ENCODE measurements at regions of chr12 and their contacts with region 1.

Region 1: DNA sequence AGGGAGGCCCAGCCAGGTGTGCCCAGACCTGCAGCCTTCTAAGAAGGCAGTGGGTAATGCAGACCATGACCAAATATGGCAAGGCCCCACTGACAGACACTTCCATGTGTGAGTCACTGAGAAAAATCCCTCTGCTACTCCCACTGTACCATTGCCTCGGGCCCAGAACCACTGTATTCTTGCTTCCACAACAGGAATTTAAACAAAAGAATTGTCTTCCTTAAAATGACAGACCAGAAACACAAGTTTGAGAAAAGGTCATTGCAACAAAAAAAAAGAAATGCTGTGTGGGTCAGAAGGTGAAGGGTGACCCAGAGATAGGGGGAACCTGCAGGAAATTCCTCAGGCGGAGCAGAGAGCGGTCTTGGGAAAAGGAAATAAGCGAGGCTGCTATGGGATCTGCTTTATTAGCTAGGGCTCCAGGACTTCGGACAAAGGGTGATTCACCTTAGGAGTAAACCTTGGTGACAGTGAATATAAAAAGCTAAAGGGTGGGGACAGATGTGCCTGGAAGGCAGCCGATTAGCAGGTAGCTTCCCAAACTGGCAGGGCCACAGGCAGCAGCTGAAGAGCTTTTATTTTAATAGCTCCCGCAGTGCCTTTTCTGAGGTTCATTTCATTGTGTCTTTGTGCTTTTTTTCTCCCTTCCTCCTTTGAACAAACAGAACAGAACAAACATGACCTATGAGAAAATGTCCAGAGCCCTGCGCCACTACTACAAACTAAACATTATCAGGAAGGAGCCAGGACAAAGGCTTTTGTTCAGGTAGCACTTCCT is 185.3 kb upstream of the BCL2L14 start:
- DNase-seq: peak; percentile 66 to 82
- H3K4me3 ChIP-seq: no peak overlapping the region
- H3K4me3 Mint-ChIP-seq: peak overlapping the region; percentile 57
- H3K27ac Mint-ChIP-seq: peak overlapping the region; percentile 67
- H3K4me1 ChIP-seq: peaks cover 49% of the 10 kb centered on the region
- H3K4me1 Mint-ChIP-seq: peaks cover 42% of the 10 kb centered on the region
- H3K27me3 ChIP-seq: no peaks in the 10 kb centered on the region
- H3K27me3 Mint-ChIP-seq: no peaks in the 10 kb centered on the region
- CTCF ChIP-seq: no peak

Region 2: DNA sequence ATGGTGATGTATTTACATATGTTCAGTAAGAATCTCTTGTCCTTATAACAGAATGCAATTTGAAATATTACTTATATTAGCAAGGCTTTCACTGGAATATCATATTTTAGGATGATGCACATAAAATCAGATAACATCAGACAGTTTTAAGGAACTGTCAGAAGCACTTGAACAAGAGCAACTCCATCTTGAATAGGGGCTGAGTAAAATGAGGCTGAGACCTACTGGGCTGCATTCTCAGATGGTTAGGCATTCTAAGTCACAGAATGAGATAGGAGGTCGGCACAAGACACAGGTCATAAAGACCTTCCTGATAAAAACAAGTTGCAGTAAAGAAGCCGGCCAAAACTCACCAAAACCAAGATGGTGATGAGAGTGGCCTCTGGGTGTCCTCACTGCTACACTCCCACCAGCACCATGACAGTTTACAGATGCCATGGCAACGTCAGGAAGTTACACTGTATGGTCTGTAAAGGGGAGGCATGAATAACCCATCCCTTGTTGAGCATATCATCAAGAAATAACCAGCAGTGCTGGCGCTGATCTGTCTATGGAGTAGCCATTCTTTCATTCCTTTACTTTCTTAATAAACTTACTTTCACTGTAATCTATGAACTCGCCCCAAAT is 263.5 kb before region 1 on chr12:
- CTCF ChIA-PET with region 1: interaction called, 3 read pairs
- POLR2A ChIA-PET with region 1: no interaction called
- intact Hi-C with region 1: loop called (anchors 10 kb)
- DNase-seq: peak; percentile 29 to 45
- H3K4me3 ChIP-seq: no peak overlapping the region
- H3K4me3 Mint-ChIP-seq: no peak overlapping the region
- H3K27ac Mint-ChIP-seq: peak overlapping the region; percentile 80
- H3K4me1 ChIP-seq: peaks cover 19% of the 10 kb centered on the region
- H3K4me1 Mint-ChIP-seq: peaks cover 26% of the 10 kb centered on the region
- H3K27me3 ChIP-seq: no peaks in the 10 kb centered on the region
- H3K27me3 Mint-ChIP-seq: no peaks in the 10 kb centered on the region
- CTCF ChIP-seq: peak in 1 of 2 experiments; percentile 35

Region 3: GRCh38 chr12:11730299-11731041 is 155.0 kb before region 1 on chr12:
- CTCF ChIA-PET with region 1: interaction called, 3 read pairs
- POLR2A ChIA-PET with region 1: no interaction called
- intact Hi-C with region 1: loop called (anchors 10 kb)
- DNase-seq: peak; percentile 75 to 79
- H3K4me3 ChIP-seq: no peak overlapping the region
- H3K4me3 Mint-ChIP-seq: no peak overlapping the region
- H3K27ac Mint-ChIP-seq: peak overlapping the region; percentile 46
- H3K4me1 ChIP-seq: peaks cover 18% of the 10 kb centered on the region
- H3K4me1 Mint-ChIP-seq: peaks cover 14% of the 10 kb centered on the region
- H3K27me3 ChIP-seq: no peaks in the 10 kb centered on the region
- H3K27me3 Mint-ChIP-seq: no peaks in the 10 kb centered on the region
- CTCF ChIP-seq: no peak

Region 4: DNA sequence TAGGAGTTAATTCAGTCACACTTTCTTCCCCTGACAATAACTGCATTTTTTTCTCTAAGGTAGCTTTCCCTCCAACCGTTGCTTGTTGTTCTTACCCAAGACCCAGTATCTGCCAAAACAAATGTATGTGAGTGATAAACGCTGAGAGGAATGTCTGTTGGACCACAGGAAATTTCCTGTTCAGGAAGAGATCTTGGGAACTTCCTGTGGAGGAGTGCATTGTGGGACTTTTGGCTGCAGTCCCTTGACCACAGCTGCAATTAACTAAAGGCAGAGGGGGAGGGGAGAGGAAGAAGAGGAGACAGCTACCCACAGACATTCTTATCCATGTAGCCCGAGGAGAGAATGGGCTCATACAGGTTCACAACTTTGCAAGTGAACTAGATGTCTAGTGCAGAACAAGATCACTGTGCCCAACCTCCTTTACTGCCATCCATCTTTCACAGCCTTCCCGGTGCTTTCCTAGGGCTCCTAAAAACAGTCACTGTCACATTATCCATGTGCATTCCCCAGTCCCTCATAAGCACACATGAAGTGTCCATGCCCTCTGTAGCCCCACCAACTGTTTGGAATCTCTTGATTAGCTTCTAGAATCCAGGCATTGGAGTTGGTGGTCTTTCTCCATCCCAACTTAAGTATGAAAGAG is 86.5 kb before region 1 on chr12:
- CTCF ChIA-PET with region 1: no interaction called
- POLR2A ChIA-PET with region 1: no interaction called
- intact Hi-C with region 1: loop called (anchors 1 kb)
- DNase-seq: no peak
- H3K4me3 ChIP-seq: no peak overlapping the region
- H3K4me3 Mint-ChIP-seq: no peak overlapping the region
- H3K27ac Mint-ChIP-seq: no peak overlapping the region
- H3K4me1 ChIP-seq: peaks cover 47% of the 10 kb centered on the region
- H3K4me1 Mint-ChIP-seq: peaks cover 46% of the 10 kb centered on the region
- H3K27me3 ChIP-seq: no peaks in the 10 kb centered on the region
- H3K27me3 Mint-ChIP-seq: no peaks in the 10 kb centered on the region
- CTCF ChIP-seq: no peak

Region 5: DNA sequence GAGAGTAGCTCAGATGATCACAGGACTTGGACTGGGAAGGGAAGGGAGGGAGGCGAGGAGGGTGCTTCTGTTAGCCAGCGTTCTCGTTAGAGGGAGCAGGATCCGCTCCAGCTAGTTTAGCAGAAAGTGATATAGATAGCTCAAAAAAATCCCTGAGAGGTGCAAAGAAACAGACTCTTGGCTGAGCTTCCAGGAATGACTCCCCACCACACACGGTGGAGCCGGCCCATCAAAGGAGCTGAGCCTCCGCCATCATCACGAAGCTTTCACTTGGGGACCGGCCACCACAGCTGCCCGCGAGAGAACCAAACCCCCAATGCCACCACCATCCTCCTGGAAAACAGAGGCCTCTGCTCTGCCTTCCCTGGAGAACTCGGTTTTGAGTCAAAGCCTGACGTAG is 60.7 kb after region 1 on chr12:
- CTCF ChIA-PET with region 1: no interaction called
- POLR2A ChIA-PET with region 1: interaction called, 17 read pairs
- intact Hi-C with region 1: no loop called
- DNase-seq: no peak
- H3K4me3 ChIP-seq: no peak overlapping the region
- H3K4me3 Mint-ChIP-seq: no peak overlapping the region
- H3K27ac Mint-ChIP-seq: no peak overlapping the region
- H3K4me1 ChIP-seq: no peaks in the 10 kb centered on the region
- H3K4me1 Mint-ChIP-seq: peaks cover 9% of the 10 kb centered on the region
- H3K27me3 ChIP-seq: peaks cover 1% of the 10 kb centered on the region; the same call in 1 of the 2 replicates
- H3K27me3 Mint-ChIP-seq: peaks cover 16% of the 10 kb centered on the region
- CTCF ChIP-seq: no peak